H1 (cell line): ENCODE measurements at regions of chr22 and their contacts with region 1.

Region 1: GRCh38 chr22:45994491-45995404 is 17.8 kb upstream of the WNT7B start:
- DNase-seq: peak in 1 of 2 experiments; percentile 100
- H3K4me3 ChIP-seq: no peak overlapping the region
- H3K27ac ChIP-seq: no peak overlapping the region
- H3K4me1 ChIP-seq: peaks cover 0 to 3% (median 0%) of the 10 kb centered on the region in 4 experiments; a peak in 2 of 7 replicates
- H3K27me3 ChIP-seq: no peaks in the 10 kb centered on the region; a peak in 2 of 7 replicates
- CTCF ChIP-seq: peak; percentile 94 to 98 (median 97)
- EP300 ChIP-seq: no peak
- POLR2A ChIP-seq: no peak
- RAD21 ChIP-seq: peak; percentile 98 to 99

Region 2: DNA sequence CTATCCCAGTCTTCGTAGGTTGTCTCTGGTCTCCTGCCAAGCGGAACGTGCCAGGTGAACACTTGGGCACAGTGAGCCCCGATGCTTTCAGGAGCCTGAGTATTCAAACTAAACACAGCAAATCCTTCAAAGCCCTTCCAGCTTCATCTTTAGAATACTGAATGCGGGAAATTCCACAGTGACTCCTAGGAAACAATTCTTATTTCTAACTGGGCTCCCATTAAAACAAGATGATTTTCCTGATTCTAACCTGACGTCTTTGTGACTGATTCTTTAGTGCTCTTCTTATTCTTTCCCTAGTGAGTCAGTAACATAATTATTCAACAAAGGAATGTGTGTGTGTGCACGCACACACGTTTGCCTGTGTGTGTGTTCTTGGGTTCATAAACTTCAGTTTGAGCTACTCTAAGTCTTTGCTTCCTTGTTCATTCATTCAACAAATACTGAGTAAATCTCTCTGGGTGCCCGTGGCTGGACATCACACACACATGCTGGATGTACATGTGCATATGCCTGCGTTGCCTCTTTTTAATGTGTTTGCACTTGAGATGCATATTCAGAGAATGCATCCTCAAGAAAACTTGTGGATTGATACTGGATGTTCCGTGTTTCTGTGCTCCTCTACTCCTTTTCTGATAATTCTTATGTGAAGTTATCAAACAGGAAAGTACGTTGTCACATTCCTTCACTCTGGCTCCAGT is 152.3 kb before region 1 on chr22:
- CTCF ChIA-PET with region 1: no interaction called
- POLR2A ChIA-PET with region 1: no interaction called
- DNase-seq: no peak
- H3K4me3 ChIP-seq: no peak overlapping the region
- H3K27ac ChIP-seq: no peak overlapping the region
- H3K4me1 ChIP-seq: peaks cover 4 to 26% (median 17%) of the 10 kb centered on the region in 4 experiments; a peak in 6 of 7 replicates
- H3K27me3 ChIP-seq: no peaks in the 10 kb centered on the region
- CTCF ChIP-seq: no peak
- EP300 ChIP-seq: no peak
- POLR2A ChIP-seq: no peak
- RAD21 ChIP-seq: no peak

Region 3: GRCh38 chr22:45917146-45917545 is 77.6 kb before region 1 on chr22:
- CTCF ChIA-PET with region 1: no interaction called
- POLR2A ChIA-PET with region 1: no interaction called
- DNase-seq: no peak
- H3K4me3 ChIP-seq: no peak overlapping the region
- H3K27ac ChIP-seq: no peak overlapping the region
- H3K4me1 ChIP-seq: no peaks in the 10 kb centered on the region; a peak in 1 of 7 replicates
- H3K27me3 ChIP-seq: no peaks in the 10 kb centered on the region
- CTCF ChIP-seq: no peak
- EP300 ChIP-seq: no peak
- POLR2A ChIP-seq: no peak
- RAD21 ChIP-seq: no peak

Region 4: DNA sequence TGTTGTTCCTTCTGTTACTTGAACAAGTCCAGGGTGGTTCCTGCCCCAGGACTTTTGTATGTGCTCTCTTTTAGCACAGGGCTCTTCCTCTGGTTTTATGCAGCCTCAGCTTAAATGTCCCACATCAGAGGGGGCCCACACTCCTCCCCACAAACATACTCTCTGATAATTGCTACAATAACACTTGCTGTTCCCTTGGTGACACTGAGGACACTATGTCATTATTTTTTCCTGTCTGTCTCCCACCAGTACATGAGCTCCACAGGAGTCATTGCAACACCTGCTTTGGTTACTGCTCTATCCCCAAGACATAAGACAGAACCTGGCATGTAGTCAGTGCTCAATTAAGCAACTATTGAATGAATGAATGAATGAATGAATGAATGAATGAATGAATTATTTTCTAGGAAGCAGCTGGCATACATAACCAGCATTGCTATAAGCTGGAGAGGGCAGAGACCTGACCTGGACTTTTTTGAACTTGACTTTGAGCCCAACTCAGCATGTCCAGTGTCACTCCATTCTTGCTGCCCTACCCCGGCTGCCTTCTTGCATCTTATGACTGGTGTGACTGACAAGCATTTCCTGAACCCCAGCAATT is 10.3 kb before region 1 on chr22:
- CTCF ChIA-PET with region 1: interaction called, 11 read pairs
- POLR2A ChIA-PET with region 1: no interaction called
- DNase-seq: no peak
- H3K4me3 ChIP-seq: no peak overlapping the region
- H3K27ac ChIP-seq: no peak overlapping the region
- H3K4me1 ChIP-seq: peaks cover 0 to 3% (median 1%) of the 10 kb centered on the region in 4 experiments; a peak in 3 of 7 replicates
- H3K27me3 ChIP-seq: peaks cover 0 to 14% (median 7%) of the 10 kb centered on the region in 4 experiments; a peak in 4 of 7 replicates
- CTCF ChIP-seq: no peak
- EP300 ChIP-seq: no peak
- POLR2A ChIP-seq: no peak
- RAD21 ChIP-seq: no peak

Region 5: DNA sequence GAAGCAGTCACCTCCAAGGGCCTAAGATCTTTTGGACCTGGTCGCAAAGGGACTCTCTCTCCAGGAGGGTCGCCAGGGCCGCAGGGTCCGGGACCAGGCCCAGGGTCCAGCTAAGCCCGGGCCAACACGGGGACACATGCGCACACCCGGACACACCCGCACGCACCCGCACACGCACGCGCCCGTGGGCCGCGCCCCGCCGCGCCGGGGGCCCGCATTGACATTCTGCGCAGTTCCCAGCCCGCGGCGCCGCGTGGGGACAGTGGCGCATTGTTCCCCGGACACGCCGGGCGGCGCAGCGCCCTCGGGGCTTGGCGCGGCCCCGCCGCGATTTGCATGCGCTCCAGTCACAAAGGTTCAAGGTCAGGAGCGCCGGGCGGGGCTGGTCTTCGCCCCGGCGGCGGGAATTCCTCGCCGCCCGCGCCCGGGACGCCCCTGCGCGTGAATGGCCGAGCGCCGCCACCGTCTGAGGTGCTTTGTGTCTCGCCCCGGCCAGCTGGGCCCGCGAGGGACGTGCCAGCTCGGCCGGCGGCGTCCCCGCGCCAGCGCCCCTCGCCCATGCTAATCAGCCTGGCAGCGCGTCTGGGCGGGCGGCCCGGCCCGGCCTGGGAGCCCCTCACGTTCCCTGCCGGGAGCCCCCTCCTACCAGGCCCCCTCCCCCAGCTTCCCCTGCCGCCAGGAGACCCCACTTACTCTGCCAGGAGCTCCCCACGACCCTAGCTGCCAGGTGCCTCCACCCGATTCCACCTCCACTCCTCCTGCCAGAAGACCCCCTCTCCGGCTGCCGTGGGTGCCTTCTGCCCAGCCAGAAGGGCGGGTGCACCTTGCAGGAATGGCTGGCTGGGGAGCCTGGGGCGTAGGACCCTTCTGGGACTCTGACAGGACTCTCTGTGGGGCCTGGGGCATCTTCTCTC is 32.7 kb after region 1 on chr22:
- CTCF ChIA-PET with region 1: interaction called, 15 read pairs
- POLR2A ChIA-PET with region 1: no interaction called
- DNase-seq: no peak
- H3K4me3 ChIP-seq: peak overlapping the region; percentile 36 to 62 (median 51)
- H3K27ac ChIP-seq: no peak overlapping the region
- H3K4me1 ChIP-seq: peaks cover 0 to 18% (median 11%) of the 10 kb centered on the region in 4 experiments; a peak in 6 of 7 replicates
- H3K27me3 ChIP-seq: peaks cover 10 to 47% (median 35%) of the 10 kb centered on the region in 4 experiments
- CTCF ChIP-seq: no peak
- EP300 ChIP-seq: no peak
- POLR2A ChIP-seq: no peak
- RAD21 ChIP-seq: no peak

Region 6: DNA sequence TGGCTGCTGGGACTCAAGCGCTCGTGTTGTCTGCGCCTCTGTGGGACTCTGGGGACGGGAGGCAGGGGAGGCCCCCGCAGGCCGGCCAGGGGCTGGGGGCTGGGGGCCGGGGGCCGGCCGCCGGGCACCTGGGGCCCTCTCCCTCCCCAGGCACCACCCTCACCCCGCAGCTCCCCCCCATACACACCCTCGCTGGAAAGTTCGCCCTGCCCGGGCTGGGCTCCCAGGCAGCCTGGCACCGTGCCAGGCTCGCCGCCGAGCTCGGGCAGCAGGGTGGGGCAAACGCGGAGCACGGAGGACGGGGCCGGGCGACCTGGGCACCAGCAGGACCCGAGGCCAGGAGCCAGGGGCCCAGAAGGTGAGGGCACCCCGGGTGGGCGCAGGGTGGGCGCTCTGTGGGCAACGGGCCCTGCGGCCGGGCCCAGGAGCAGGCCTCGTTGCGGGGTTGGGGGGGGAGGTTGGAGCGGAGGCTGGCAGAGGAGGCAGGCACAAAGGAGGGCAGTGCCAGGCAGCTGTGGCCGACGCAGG is 58.9 kb after region 1 on chr22:
- CTCF ChIA-PET with region 1: interaction called, 11 read pairs
- POLR2A ChIA-PET with region 1: no interaction called
- DNase-seq: no peak
- H3K4me3 ChIP-seq: no peak overlapping the region
- H3K27ac ChIP-seq: no peak overlapping the region
- H3K4me1 ChIP-seq: peaks cover 0 to 6% (median 2%) of the 10 kb centered on the region in 4 experiments; a peak in 5 of 7 replicates
- H3K27me3 ChIP-seq: peaks cover 0 to 3% (median under 1%) of the 10 kb centered on the region in 4 experiments; a peak in 1 of 7 replicates
- CTCF ChIP-seq: no peak
- EP300 ChIP-seq: no peak
- POLR2A ChIP-seq: no peak
- RAD21 ChIP-seq: no peak

Region 7: GRCh38 chr22:46116491-46116958 is 121.8 kb after region 1 on chr22:
- CTCF ChIA-PET with region 1: interaction called, 111 read pairs
- POLR2A ChIA-PET with region 1: interaction called, 4 read pairs
- DNase-seq: peak; percentile 67 to 96
- H3K4me3 ChIP-seq: no peak overlapping the region
- H3K27ac ChIP-seq: no peak overlapping the region
- H3K4me1 ChIP-seq: peaks cover 0 to 8% (median 7%) of the 10 kb centered on the region in 4 experiments; a peak in 4 of 7 replicates
- H3K27me3 ChIP-seq: no peaks in the 10 kb centered on the region; a peak in 2 of 7 replicates
- CTCF ChIP-seq: peak; percentile 75 to 99 (median 93)
- EP300 ChIP-seq: no peak
- POLR2A ChIP-seq: no peak
- RAD21 ChIP-seq: peak; percentile 94 to 96

Region 8: DNA sequence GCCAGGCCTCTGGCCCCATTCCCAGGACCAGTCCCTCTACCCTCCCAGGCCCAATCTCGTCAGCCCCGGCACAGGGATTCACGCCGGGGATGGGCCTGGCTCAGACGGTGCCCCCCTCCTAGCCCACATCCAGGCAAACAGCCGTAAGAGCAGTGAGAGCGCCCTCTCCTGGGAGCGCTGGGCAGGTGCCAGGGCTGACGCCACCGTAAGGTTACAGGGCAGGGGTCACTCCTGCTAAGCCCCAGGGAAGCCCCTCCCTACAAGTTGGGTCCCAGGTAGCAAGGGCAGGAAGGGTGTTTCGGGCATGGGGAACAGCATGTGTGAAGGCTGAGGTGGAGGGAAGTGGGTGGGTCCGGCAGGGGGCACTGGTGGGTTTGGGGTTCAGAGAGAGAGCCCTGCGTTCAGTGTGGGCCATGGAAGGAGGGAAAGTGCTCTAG is 136.4 kb after region 1 on chr22:
- CTCF ChIA-PET with region 1: interaction called, 12 read pairs
- POLR2A ChIA-PET with region 1: no interaction called
- DNase-seq: peak; percentile 50 to 91
- H3K4me3 ChIP-seq: no peak overlapping the region
- H3K27ac ChIP-seq: no peak overlapping the region
- H3K4me1 ChIP-seq: no peaks in the 10 kb centered on the region
- H3K27me3 ChIP-seq: no peaks in the 10 kb centered on the region
- CTCF ChIP-seq: peak; percentile 91 to 98 (median 98)
- EP300 ChIP-seq: no peak
- POLR2A ChIP-seq: no peak
- RAD21 ChIP-seq: peak; percentile 69 to 76